Endothelial cell of umbilical vein (primary cell): ENCODE measurements at regions of chr11 and their contacts with region 1.

Region 1: GRCh38 chr11:110046775-110047380 is 46.3 kb upstream of the ZC3H12C start:
- DNase-seq: no peak
- H3K4me3 ChIP-seq: no peak overlapping the region
- H3K27ac ChIP-seq: no peak overlapping the region
- H3K4me1 ChIP-seq: no peaks in the 10 kb centered on the region
- H3K27me3 ChIP-seq: no peaks in the 10 kb centered on the region
- CTCF ChIP-seq: no peak
- POLR2A ChIP-seq: no peak

Region 2: GRCh38 chr11:110000031-110000502 is 46.8 kb before region 1 on chr11:
- CTCF ChIA-PET with region 1: no interaction called
- POLR2A ChIA-PET with region 1: no interaction called
- dilution Hi-C with region 1: no loop called
- intact Hi-C with region 1: loop called (anchors 5 kb)
- DNase-seq: peak; percentile 24
- H3K4me3 ChIP-seq: no peak overlapping the region
- H3K27ac ChIP-seq: no peak overlapping the region
- H3K4me1 ChIP-seq: peaks cover 3% of the 10 kb centered on the region
- H3K27me3 ChIP-seq: no peaks in the 10 kb centered on the region
- CTCF ChIP-seq: no peak
- POLR2A ChIP-seq: no peak